Aorta (tissue), 5 donors: ENCODE measurements at regions of chr16 and their contacts with region 1.

Region 1: GRCh38 chr16:46607529-46607928 is 13.7 kb downstream of the SHCBP1 start:
- DNase-seq: no peak
- ATAC-seq: no peak
- H3K4me3 ChIP-seq: no peak overlapping the region
- H3K27ac ChIP-seq: no peak overlapping the region
- H3K4me1 ChIP-seq: no peaks in the 10 kb centered on the region
- H3K27me3 ChIP-seq: no peaks in the 10 kb centered on the region

Region 2: GRCh38 chr16:46428125-46429061 is 179.1 kb before region 1 on chr16:
- intact Hi-C with region 1: no loop called
- DNase-seq: peak; percentile 10 to 58
- ATAC-seq: no peak
- H3K4me3 ChIP-seq: no peak overlapping the region
- H3K27ac ChIP-seq: no peak overlapping the region
- H3K4me1 ChIP-seq: no peaks in the 10 kb centered on the region
- H3K27me3 ChIP-seq: peaks cover 0 to 3% of the 10 kb centered on the region in 2 donors

Region 3: GRCh38 chr16:46555951-46556350 is 51.6 kb before region 1 on chr16:
- intact Hi-C with region 1: loop called in 1 of 2 experiments (anchors 2 kb)
- DNase-seq: no peak
- ATAC-seq: no peak
- H3K4me3 ChIP-seq: no peak overlapping the region
- H3K27ac ChIP-seq: no peak overlapping the region
- H3K4me1 ChIP-seq: no peaks in the 10 kb centered on the region
- H3K27me3 ChIP-seq: no peaks in the 10 kb centered on the region

Region 4: GRCh38 chr16:46689365-46690280 is 82.1 kb after region 1 on chr16 and contains the start of gene ORC6:
- intact Hi-C with region 1: no loop called
- DNase-seq: peak; percentile 99
- ATAC-seq: peak; percentile 97
- H3K4me3 ChIP-seq: peak within 1 kb of the TSS; percentile 64 to 85
- H3K27ac ChIP-seq: peak within 1 kb of the TSS in 1 of 2 donors; percentile 96
- H3K4me1 ChIP-seq: peaks cover 0 to 2% of the 10 kb centered on the region in 2 donors
- H3K27me3 ChIP-seq: no peaks in the 10 kb centered on the region
- total RNA-seq, gene ORC6: 1.6 TPM